ENCODE measurements at regions of chr16 and their contacts with region 1.

Region 1: GRCh38 chr16:51982715-51983680 is 563.9 kb downstream of the TOX3 start:
- DNase-seq: peak in 4 of 10 donors; percentile 5 to 63 (median 34)
- H3K4me3 ChIP-seq: peak overlapping the region in 1 of 59 donors; percentile 1
- H3K27ac ChIP-seq: peak overlapping the region in 10 of 59 donors; percentile 2 to 67 (median 34)
- H3K27me3 ChIP-seq: peaks cover 0 to 6% (median 0%) of the 10 kb centered on the region in 45 donors
- CTCF ChIP-seq: peak; percentile 69 to 99 (median 89)

Region 2: DNA sequence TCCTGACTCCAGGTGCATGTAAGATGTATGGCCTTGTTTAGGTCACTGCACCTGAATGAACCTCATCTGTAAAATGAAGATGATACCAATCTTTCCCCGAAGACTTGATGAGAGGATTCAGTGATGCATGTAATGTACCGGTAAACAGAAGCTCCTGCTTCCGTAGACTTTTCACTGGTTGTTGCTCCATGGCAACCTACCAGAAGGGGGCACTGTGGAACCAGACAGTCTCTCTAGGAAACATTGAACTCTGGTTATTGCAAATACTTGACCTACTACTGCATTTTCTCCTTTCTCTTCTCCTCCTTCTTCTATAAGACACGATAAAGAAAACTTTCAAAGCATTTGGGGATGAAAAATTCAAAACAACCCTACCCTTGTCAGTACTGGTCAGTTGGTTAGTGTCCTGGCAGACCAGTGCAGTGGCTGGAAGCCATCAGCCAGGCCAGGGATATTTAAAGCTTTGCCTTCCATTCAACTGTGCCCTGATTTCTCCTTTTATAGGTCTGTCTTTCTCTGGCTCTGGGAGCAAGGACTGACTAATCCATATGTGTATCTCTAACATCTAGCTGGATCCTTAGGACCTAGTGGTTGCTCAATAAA is 164.6 kb before region 1 on chr16:
- intact Hi-C with region 1: loop called (anchors 2 to 5 kb)
- DNase-seq: peak in 3 of 10 donors; percentile 34 to 52 (median 35)
- H3K4me3 ChIP-seq: no peak overlapping the region
- H3K27ac ChIP-seq: no peak overlapping the region
- H3K27me3 ChIP-seq: peaks cover 0 to 7% (median 0%) of the 10 kb centered on the region in 45 donors
- CTCF ChIP-seq: peak; percentile 23 to 69 (median 54)

Measured in dorsolateral prefrontal cortex (tissue), 120 donors.